ENCODE measurements at regions of chr1 and their contacts with region 1.

Region 1: DNA sequence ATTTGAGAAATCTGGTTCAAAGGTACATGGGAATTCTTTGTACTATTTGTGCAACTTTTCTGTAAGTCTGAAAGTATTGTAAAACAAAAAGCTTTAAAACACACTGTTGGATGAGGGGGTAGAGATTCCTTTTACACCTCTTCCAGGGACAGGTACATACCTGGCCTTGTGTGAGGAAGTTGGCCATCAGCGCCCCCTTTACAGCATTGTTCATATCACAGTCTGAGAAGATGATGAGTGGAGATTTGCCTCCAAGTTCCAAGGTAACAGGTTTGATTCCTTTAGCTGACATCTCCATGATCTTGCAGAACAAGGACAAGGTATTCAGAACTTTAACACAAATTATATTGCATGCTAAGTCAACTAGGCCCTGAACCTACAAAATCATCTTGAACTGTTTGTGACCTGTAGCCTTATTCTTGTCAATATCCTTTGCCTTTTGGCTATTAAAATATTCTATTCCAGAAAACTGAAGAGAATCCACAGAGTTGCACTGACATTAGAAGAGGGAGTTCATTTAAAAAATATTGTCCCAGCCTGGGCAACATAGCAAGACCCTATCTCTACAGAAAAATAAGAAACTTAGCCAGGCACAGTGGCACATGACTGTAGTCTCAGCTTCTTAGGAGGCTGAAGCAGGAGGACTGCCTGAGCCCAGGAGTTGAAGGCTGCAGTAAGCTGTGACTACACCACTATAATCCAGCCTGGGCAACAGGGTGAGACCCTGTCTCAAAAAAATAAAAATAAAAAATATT is 18.9 kb downstream of the ALDH9A1 start:
- DNase-seq: no peak
- ATAC-seq: no peak
- H3K4me3 Mint-ChIP-seq: no peak overlapping the region
- H3K27ac Mint-ChIP-seq: peak overlapping the region; percentile 14
- H3K4me1 Mint-ChIP-seq: peaks cover 21% of the 10 kb centered on the region
- H3K27me3 Mint-ChIP-seq: no peaks in the 10 kb centered on the region

Region 2: DNA sequence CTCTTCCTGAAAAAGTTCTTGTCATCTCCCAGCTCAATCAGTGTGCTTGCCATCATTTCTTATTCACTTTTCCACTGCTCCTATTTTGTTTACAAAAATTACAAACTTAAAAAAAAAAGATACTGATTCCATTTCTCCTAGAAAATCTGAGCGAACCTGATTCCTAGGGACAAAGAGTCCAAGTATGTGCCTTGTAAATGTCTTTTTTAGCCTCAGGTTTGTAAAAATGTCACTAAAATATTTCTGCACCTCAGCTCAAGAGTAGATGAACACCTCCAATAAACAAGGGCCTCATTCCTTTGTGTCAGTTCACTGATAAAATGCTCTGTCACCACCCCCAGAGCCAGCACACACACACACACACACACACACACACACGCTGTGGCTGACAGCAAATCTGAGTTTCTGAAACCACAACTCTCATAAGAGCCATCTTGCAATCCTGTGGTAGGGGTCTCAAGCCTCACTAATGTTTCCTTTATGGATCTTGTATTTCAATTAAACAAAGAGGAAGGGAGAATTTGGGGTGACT is 821.3 kb before region 1 on chr1:
- CTCF ChIA-PET with region 1: no interaction called
- POLR2A ChIA-PET with region 1: no interaction called
- intact Hi-C with region 1: no loop called
- DNase-seq: no peak
- ATAC-seq: no peak
- H3K4me3 Mint-ChIP-seq: no peak overlapping the region
- H3K27ac Mint-ChIP-seq: no peak overlapping the region
- H3K4me1 Mint-ChIP-seq: no peaks in the 10 kb centered on the region
- H3K27me3 Mint-ChIP-seq: peaks cover 4% of the 10 kb centered on the region

Region 3: GRCh38 chr1:165661703-165662102 is 17.8 kb before region 1 on chr1:
- CTCF ChIA-PET with region 1: interaction called, 3 read pairs
- POLR2A ChIA-PET with region 1: no interaction called
- intact Hi-C with region 1: loop called in 1 of 2 experiments (anchors 2 kb)
- DNase-seq: no peak
- ATAC-seq: no peak
- H3K4me3 Mint-ChIP-seq: no peak overlapping the region
- H3K27ac Mint-ChIP-seq: peak overlapping the region; percentile 1
- H3K4me1 Mint-ChIP-seq: peaks cover 2% of the 10 kb centered on the region
- H3K27me3 Mint-ChIP-seq: no peaks in the 10 kb centered on the region

Measured in activated CD4-positive, alpha-beta T cell treated with anti-CD3 and anti-CD28 coated beads for 36 hours (primary cell).